Mammary epithelial cell (primary cell): ENCODE measurements at regions of chr7 and their contacts with region 1.

Region 1: GRCh38 chr7:130356121-130356875 is 11.7 kb downstream of the CPA5 start:
- DNase-seq: peak; percentile 95
- H3K4me3 ChIP-seq: no peak overlapping the region
- H3K27ac ChIP-seq: peak overlapping the region; percentile 86
- H3K4me1 ChIP-seq: peaks cover 54% of the 10 kb centered on the region
- H3K27me3 ChIP-seq: no peaks in the 10 kb centered on the region
- CTCF ChIP-seq: no peak

Region 2: DNA sequence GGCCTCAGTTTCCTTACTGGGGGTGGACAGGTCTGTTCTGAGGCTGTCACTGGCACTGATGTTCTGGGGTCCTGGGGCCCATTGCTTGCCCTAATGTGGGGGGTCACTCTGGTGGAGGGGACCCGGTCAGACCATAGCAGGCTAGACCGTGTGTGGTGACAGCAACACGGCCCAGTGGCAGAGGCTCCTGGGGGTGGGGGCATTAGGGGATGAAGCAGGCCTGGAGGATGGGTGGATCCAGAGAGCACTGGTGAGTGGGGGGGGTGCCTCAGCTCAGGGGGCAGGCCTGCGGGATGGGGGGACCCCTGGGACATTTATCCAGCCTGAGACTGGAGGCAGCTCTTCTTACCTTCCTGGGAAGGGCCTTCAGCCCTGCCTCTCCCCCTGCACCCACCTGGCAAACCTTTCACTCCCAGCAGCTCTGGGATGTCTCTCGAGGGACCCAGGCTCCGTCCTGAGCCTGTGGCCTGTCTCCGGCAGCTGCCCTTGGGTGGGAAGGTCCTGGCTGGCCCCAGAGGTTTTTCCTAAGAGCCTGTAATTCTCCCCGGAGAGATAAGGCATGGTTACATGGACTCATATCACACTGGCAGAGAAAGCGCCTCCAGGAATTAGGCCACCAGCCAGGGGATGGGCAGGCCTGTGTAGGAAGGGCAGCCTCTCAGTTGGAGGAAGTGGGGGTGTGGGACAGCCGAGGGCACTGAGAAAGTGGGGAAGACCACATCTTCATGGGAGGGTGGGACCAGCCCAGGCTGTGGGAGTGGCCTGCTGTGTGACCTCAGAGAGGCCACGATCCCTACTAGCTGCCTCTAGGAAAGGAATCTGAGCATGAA is 551.2 kb before region 1 on chr7:
- CTCF ChIA-PET with region 1: no interaction called
- dilution Hi-C with region 1: no loop called
- in situ Hi-C with region 1: no loop called
- intact Hi-C with region 1: no loop called
- DNase-seq: no peak
- H3K4me3 ChIP-seq: no peak overlapping the region
- H3K27ac ChIP-seq: no peak overlapping the region
- H3K4me1 ChIP-seq: no peaks in the 10 kb centered on the region
- H3K27me3 ChIP-seq: no peaks in the 10 kb centered on the region
- CTCF ChIP-seq: no peak

Region 3: DNA sequence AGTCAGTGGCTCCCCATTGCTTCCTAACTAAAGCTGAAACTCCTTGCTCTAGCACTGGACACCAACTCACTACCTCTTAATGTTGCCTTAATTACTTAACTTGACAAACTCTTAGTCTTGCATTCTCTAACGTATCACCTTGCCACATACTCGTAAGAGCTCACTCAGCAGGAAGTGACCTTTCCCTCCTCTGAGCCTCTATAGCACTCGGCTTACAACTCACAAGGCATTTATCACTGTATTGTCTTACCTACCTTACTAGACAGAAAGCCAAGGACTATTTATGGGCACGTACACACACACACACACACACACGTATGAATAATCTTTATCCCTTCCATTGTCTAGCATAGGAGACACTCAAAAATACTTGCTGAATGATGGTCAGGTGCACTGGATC is 63.4 kb after region 1 on chr7:
- CTCF ChIA-PET with region 1: no interaction called
- dilution Hi-C with region 1: no loop called
- in situ Hi-C with region 1: no loop called
- intact Hi-C with region 1: loop called (anchors 1 kb)
- DNase-seq: peak; percentile 44
- H3K4me3 ChIP-seq: no peak overlapping the region
- H3K27ac ChIP-seq: no peak overlapping the region
- H3K4me1 ChIP-seq: peaks cover 27% of the 10 kb centered on the region
- H3K27me3 ChIP-seq: no peaks in the 10 kb centered on the region
- CTCF ChIP-seq: no peak

Region 4: GRCh38 chr7:130430841-130431666 is 74.8 kb after region 1 on chr7:
- CTCF ChIA-PET with region 1: no interaction called
- dilution Hi-C with region 1: loop called (anchors 5 kb)
- in situ Hi-C with region 1: no loop called
- intact Hi-C with region 1: no loop called
- DNase-seq: peak; percentile 14
- H3K4me3 ChIP-seq: peak overlapping the region; percentile 23 to 43 (median 24)
- H3K27ac ChIP-seq: peak overlapping the region; percentile 43
- H3K4me1 ChIP-seq: peaks cover 31% of the 10 kb centered on the region
- H3K27me3 ChIP-seq: no peaks in the 10 kb centered on the region
- CTCF ChIP-seq: no peak